ENCODE measurements at regions of chr2 and their contacts with region 1.

Region 1: DNA sequence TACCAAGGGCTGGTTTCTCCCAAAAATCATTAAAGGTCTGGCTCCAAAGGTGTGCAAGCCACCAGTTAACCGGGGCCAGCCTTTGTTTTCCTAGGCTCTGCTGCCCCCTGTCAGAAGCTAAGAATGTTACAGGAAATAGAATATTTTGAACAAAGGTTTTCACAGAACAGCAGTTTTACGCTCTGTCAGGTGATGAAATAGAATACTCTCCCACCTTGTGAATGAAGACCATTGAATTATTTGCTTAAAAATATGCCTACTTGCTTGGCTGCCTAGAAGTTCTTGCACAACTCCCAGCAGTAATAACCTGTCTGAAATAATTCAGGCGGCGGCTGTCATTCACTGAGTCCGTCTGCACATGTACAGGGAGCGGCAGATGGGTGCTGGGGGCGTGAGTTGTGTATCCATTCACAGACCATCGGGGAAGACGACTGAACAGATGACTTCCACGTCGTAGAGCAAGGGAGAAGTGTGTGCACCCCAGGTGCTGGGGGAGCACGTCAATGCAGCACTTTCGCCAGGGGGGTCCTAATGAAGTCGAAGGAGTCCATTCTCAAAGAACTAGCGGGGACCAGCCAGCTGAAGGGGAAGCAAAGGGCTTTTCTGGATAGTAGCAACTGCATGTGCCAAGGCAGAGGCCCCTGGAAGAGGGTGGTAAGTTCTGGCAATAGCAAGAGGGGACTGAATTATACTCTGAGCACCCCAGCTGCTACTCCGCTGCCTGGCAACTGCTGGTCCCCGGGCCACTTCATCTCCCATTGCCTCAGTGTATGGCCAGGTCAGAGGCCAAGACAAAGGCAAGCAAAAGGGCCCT is 56.1 kb downstream of the SF3B1 start:
- DNase-seq: peak; percentile 28 to 53
- H3K4me3 ChIP-seq: no peak overlapping the region
- H3K27ac ChIP-seq: no peak overlapping the region
- H3K4me1 ChIP-seq: no peaks in the 10 kb centered on the region
- H3K27me3 ChIP-seq: no peaks in the 10 kb centered on the region
- CTCF ChIP-seq: peak; percentile 20 to 82 (median 69)
- POLR2A ChIP-seq: no peak

Region 2: GRCh38 chr2:197011799-197012641 is 366.7 kb before region 1 on chr2:
- intact Hi-C with region 1: loop called (anchors 5 kb)
- DNase-seq: peak; percentile 9 to 11
- H3K4me3 ChIP-seq: no peak overlapping the region
- H3K27ac ChIP-seq: no peak overlapping the region
- H3K4me1 ChIP-seq: no peaks in the 10 kb centered on the region
- H3K27me3 ChIP-seq: no peaks in the 10 kb centered on the region
- CTCF ChIP-seq: peak; percentile 12 to 77 (median 60)
- POLR2A ChIP-seq: no peak

Region 3: DNA sequence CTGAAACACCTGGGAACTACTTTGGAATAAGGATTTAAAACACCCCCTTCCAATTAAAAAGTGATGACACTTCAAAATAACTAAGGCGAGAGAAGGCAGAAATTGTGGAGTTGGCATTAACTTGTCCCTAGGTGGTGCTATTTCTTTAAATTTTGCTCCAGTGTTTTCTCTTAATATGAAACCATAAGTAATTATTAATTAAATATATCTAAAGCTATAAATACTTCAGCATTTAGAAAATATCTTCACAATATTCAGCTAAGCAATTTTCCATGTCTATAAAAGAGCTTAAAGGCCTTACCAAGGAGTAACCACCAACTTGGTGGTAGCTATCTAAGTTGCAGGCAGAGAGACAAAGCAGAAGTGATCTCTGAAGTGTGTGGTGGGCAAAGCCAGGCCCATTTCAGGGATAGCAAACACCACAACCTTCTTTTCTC is 265.4 kb before region 1 on chr2:
- intact Hi-C with region 1: loop called (anchors 5 kb)
- DNase-seq: no peak
- H3K4me3 ChIP-seq: no peak overlapping the region
- H3K27ac ChIP-seq: no peak overlapping the region
- H3K4me1 ChIP-seq: peaks cover 0 to 4% of the 10 kb centered on the region in 2 donors
- H3K27me3 ChIP-seq: no peaks in the 10 kb centered on the region
- CTCF ChIP-seq: peak in 5 of 6 experiments; percentile 19 to 63 (median 51)
- POLR2A ChIP-seq: no peak

Region 4: GRCh38 chr2:197191177-197191939 is 187.3 kb before region 1 on chr2:
- intact Hi-C with region 1: loop called (anchors 5 kb)
- DNase-seq: no peak
- H3K4me3 ChIP-seq: no peak overlapping the region
- H3K27ac ChIP-seq: no peak overlapping the region
- H3K4me1 ChIP-seq: peaks cover 0 to 3% of the 10 kb centered on the region in 2 donors
- H3K27me3 ChIP-seq: no peaks in the 10 kb centered on the region
- CTCF ChIP-seq: peak; percentile 33 to 81 (median 54)
- POLR2A ChIP-seq: no peak